Posterior vena cava (tissue), 2 donors: ENCODE measurements at regions of chr12 and their contacts with region 1.

Region 1: DNA sequence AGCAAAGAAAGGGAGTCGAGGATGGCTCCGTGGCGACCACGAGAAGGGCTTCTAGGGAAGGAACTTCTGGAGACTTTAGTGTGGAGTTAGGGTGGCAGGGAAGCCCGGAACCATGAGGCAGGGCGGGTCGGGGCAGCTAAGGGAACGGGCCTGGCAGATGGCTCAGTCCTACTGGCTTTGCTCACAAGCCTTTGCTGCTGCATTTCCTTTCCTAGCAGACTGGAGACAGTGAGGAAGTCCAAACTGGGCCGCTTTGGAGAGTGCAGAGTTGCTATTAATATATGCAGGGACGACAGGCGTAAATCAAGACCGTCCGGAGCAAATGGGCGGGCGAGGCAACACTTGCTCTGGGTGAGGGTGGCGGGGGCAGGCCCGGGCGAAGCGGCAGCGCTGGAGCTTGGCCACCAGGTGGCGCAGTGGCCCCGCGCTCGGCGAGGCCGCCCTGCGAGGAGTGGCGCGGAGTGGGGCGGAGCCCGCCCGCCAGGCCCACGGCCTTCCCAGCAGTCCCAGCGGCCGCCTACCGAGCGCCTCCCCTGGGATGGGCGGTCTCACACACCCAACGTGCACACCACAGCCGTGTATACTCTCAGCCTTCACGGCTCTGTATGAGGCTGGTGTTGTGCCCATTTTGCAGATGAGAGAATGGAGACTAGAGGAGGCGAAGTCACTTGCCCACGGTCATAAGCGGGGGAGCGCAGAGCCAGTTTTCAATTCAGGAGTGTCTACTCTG is 24.4 kb upstream of the LRTM2 start:
- DNase-seq: peak; percentile 98

Region 2: GRCh38 chr12:1650260-1650977 is 145.5 kb before region 1 on chr12:
- intact Hi-C with region 1: loop called (anchors 2 to 5 kb)
- DNase-seq: no peak

Region 3: GRCh38 chr12:1907652-1908611 is 112.0 kb after region 1 on chr12:
- intact Hi-C with region 1: no loop called
- DNase-seq: peak; percentile 79

Region 4: DNA sequence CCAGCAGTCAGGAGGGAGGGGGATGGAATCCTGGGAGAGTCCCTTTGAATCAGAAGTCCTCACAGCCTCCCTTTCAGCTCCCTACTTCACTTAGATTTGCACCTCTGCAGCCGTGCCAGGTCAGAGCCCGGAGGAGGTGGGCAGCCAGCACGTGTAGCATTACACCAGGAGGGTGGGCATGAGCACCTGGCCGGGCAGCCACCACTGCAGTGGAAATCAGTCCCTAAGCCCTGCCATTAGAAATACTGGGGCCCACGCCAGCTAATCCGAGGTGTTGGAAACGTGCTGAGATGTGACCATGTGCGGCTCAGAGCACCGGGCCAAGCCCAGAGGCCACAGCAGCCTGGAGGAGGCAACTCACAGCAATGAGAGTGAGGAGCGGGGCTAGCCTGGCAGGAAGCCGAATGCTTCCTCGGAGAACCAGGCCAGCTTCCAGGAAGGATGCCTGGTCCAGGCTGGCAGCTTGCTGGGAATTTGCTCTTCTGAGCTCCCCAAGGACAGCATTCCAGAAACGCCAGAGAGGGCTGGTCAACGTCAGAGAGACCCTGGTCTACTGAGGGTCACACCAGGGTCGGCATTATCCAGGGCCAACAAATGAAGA is 131.9 kb after region 1 on chr12:
- intact Hi-C with region 1: loop called in 1 of 2 experiments (anchors 5 kb)
- DNase-seq: no peak

Region 5: DNA sequence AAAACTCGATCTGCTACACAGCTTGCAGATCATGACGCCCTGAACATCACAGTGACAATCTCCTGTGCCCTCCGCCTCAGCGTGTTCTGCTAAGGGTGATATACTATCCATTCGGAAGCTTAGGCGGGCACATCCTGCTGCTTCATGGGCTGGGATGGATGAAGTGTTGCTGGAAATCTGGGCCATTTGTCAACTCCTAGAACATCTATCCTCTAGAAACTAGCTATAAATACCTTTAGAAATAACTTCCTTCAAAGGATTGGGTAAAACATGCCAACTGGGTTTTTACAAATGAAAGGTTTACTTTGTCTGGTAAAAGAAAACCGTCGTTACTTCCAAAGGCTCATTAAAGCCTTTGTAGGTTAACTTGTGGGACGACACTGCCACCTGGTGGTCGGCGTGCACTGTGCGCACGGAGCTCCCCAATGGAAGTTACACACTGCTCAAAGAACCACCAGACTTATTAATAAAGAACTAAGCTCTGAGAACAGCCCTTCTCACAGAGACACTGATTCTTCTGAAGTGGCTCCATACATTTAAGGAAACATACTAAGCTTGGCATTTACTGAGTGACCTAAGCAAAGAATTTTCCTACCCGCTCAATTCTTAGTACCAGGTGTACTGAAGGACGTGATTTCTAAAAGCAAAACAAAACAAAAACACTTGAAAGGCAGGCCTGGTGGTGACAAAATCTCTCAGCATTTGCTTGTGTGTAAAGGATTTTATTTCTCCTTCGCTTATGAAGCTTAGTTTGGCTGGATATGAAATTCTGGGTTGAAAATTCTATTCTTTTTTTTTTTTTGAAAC is 144.1 kb after region 1 on chr12:
- intact Hi-C with region 1: loop called in 1 of 2 experiments (anchors 2 kb)
- DNase-seq: peak; percentile 97

Region 6: GRCh38 chr12:2034633-2035430 is 238.9 kb after region 1 on chr12:
- intact Hi-C with region 1: loop called (anchors 5 to 10 kb)
- DNase-seq: peak; percentile 96

Region 7: GRCh38 chr12:2583091-2583497 is 787.1 kb after region 1 on chr12:
- intact Hi-C with region 1: loop called in 1 of 2 experiments (anchors 10 kb)
- DNase-seq: peak; percentile 91